ENCODE measurements at regions of chrX and their contacts with region 1.

Region 1: DNA sequence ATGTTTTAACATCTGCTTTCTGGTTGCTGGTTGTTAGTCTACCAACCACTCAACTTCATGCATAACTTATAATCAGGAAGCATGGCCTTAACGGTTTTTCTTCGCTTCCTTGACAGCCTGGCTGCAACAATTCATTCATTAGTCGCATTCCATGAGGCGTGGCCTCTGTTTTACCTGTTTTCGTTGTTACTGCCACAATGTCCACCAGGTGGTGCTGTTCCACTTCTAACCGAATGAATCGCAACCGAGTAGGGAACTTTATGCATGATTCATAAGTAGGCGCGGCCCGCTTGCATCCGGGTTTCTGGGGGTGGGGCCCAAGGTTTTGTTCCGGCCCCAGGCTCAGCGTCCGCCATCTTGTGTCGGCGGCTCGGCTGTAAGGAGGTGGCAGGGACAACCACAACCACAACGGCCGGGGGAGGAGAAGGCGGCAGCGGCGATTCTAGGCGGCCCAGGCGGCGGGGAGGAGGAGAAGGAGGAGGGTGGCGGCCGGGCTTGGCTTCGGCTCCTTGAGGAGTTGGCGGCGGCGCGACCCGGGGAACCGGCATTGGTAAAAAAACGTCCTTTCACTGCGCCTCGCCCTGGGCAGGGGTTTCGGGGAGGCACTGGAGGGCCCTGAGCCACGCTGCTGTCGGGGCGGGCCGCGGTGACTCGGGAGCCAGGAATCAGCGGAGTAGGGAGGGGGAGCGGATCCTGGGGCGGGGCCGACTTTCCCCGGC is at the start of gene UBA1:
- DNase-seq: peak; percentile 84 to 92
- ATAC-seq: peak; percentile 79 to 84
- H3K4me3 ChIP-seq: peak within 1 kb of the TSS; percentile 69 to 97 (median 89)
- H3K27ac ChIP-seq: peak within 1 kb of the TSS; percentile 98 to 100 (median 98)
- H3K4me1 ChIP-seq: peaks cover 29 to 46% of the 10 kb centered on the region in 2 donors
- H3K27me3 ChIP-seq: no peaks in the 10 kb centered on the region
- CTCF ChIP-seq: peak; percentile 58 to 96 (median 91)
- POLR2A ChIP-seq: peak; percentile 84 to 86
- total RNA-seq, gene UBA1: 113 to 181 (median 162) TPM

Region 2: GRCh38 chrX:46865281-46865680 is 328.4 kb before region 1 on chrX:
- in situ Hi-C with region 1: no loop called
- intact Hi-C with region 1: no loop called
- DNase-seq: no peak
- ATAC-seq: no peak
- H3K4me3 ChIP-seq: no peak overlapping the region
- H3K27ac ChIP-seq: no peak overlapping the region
- H3K4me1 ChIP-seq: no peaks in the 10 kb centered on the region
- H3K27me3 ChIP-seq: no peaks in the 10 kb centered on the region
- CTCF ChIP-seq: no peak
- POLR2A ChIP-seq: no peak

Region 3: GRCh38 chrX:47233337-47234113 is 39.9 kb after region 1 on chrX:
- in situ Hi-C with region 1: no loop called
- intact Hi-C with region 1: loop called (anchors 1 kb)
- DNase-seq: peak; percentile 91 to 94
- ATAC-seq: peak; percentile 92 to 94
- H3K4me3 ChIP-seq: peak overlapping the region; percentile 57 to 84 (median 74)
- H3K27ac ChIP-seq: peak overlapping the region; percentile 88 to 93 (median 91)
- H3K4me1 ChIP-seq: peaks cover 0 to 3% of the 10 kb centered on the region in 2 donors
- H3K27me3 ChIP-seq: no peaks in the 10 kb centered on the region
- CTCF ChIP-seq: no peak
- POLR2A ChIP-seq: peak; percentile 36 to 76

Region 4: DNA sequence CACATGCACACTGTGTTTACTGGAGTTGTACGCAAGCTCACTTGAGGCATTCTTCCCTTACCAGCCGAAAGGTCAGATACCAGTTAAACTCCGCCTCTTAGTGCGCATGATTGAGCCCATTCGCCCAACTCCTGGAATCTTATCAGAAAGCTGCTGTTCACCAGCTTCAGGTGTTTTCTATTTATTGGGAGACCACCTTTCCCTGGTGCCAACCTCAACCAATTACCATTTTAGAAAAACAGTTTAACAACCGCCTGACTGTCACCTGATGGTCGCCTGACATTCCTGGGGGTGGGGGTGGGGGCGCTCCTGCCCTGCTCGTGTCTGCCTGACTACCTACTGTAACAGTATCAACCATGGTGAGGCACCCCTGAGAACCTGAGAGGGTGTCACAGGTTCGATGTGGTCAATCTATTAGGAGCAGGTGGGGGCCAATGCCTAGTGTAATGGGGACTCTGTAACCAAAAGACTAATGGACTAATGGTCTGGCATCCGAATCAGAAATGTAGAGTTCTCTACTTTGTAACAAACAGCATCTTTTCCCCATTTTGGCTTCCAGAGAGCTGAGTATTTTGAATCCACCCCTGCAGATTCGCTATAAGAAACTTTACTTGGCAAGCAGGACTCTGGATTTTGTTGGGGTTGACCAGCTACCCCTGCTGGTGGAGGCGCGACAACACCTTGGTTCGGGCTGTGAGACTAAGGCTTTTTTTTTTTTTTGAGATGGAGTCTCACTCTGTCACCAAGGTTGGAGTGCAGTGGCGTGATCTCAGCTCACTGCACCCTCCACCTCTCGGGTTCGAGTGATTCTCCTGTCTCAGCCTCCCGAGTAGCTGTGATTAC is 118.5 kb after region 1 on chrX:
- in situ Hi-C with region 1: no loop called
- intact Hi-C with region 1: no loop called
- DNase-seq: no peak
- ATAC-seq: no peak
- H3K4me3 ChIP-seq: no peak overlapping the region
- H3K27ac ChIP-seq: no peak overlapping the region
- H3K4me1 ChIP-seq: no peaks in the 10 kb centered on the region
- H3K27me3 ChIP-seq: peaks cover 0 to 9% (median 0%) of the 10 kb centered on the region in 3 donors
- CTCF ChIP-seq: no peak
- POLR2A ChIP-seq: no peak

Region 5: GRCh38 chrX:47373198-47373597 is 179.6 kb after region 1 on chrX:
- in situ Hi-C with region 1: loop called in 2 of 4 experiments (anchors 5 to 25 kb)
- intact Hi-C with region 1: loop called (anchors 5 kb)
- DNase-seq: no peak
- ATAC-seq: no peak
- H3K4me3 ChIP-seq: no peak overlapping the region
- H3K27ac ChIP-seq: no peak overlapping the region
- H3K4me1 ChIP-seq: no peaks in the 10 kb centered on the region
- H3K27me3 ChIP-seq: no peaks in the 10 kb centered on the region
- CTCF ChIP-seq: no peak
- POLR2A ChIP-seq: no peak

Region 6: GRCh38 chrX:47482512-47483309 is 289.1 kb after region 1 on chrX and contains the start of gene ZNF41:
- in situ Hi-C with region 1: no loop called
- intact Hi-C with region 1: loop called (anchors 5 kb)
- DNase-seq: peak; percentile 67 to 86
- ATAC-seq: peak; percentile 88 to 89
- H3K4me3 ChIP-seq: peak within 1 kb of the TSS; percentile 66 to 81 (median 75)
- H3K27ac ChIP-seq: peak within 1 kb of the TSS; percentile 93 to 97 (median 96)
- H3K4me1 ChIP-seq: peaks cover 8 to 26% of the 10 kb centered on the region in 2 donors
- H3K27me3 ChIP-seq: no peaks in the 10 kb centered on the region
- CTCF ChIP-seq: no peak
- POLR2A ChIP-seq: peak; percentile 45 to 55
- total RNA-seq, gene ZNF41: 8.7 to 14.9 (median 11.7) TPM

Region 7: DNA sequence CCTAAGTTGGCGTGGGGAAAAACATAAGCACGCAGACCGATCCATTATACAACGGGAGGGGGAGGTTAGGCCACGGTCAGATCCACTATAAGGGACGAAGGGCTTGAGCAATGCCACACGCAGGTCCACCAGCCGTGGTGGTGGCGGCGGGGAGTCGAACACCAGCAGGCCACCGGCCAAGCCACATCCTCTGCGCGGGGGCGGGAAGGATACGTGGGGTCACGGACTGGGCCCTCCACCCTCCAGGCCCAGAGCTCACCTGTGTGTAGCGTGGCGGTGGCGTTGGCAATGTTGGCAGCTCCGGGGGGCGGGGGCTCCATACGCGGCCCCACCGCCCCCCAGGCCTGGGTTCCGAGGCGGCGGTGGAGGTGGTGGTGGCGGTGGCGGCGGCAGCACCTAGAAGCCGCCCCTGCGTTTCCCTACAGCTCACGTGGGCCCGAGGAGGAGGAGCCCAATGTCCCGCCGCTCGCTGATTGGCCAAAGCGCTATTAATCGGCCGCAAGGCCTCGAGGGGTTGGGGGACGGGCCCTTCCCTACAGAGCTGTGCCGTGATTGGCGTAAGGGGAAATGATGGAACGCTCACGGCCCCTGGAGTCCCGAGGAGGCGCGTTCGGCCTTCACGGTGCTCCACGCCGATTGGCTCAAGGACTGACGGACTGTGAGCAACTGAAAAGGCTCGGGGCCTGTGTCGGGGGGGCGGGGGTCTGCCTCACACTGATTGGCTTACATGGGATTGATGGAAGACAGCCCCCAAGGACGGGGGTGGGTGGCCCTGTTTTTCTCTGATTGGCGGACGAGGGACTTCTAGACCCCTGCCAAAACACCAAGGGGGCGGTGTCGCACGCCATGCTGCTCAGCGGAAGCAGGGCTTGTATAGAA is 456.8 kb after region 1 on chrX and contains the start of gene ELK1:
- in situ Hi-C with region 1: no loop called
- intact Hi-C with region 1: loop called (anchors 2 kb)
- DNase-seq: peak; percentile 95 to 97
- ATAC-seq: peak; percentile 92 to 95
- H3K4me3 ChIP-seq: peak within 1 kb of the TSS; percentile 66 to 79 (median 70)
- H3K27ac ChIP-seq: peak within 1 kb of the TSS; percentile 85 to 94 (median 92)
- H3K4me1 ChIP-seq: peaks cover 5 to 8% of the 10 kb centered on the region in 2 donors
- H3K27me3 ChIP-seq: no peaks in the 10 kb centered on the region
- CTCF ChIP-seq: no peak
- POLR2A ChIP-seq: peak; percentile 72 to 73
- total RNA-seq, gene ELK1: 35.0 to 65.6 (median 58.8) TPM

Measured in gastrocnemius medialis (tissue), 4 donors.